ENCODE measurements at regions of chr6 and their contacts with region 1.

Region 1: GRCh38 chr6:109073344-109074132 is 21.1 kb downstream of the SESN1 start:
- DNase-seq: no peak
- H3K4me3 ChIP-seq: no peak overlapping the region
- H3K27ac ChIP-seq: no peak overlapping the region
- H3K4me1 ChIP-seq: peaks cover 22 to 63% (median 51%) of the 10 kb centered on the region in 4 donors
- H3K27me3 ChIP-seq: no peaks in the 10 kb centered on the region
- CTCF ChIP-seq: peak; percentile 60 to 80 (median 71)
- EP300 ChIP-seq: no peak
- POLR2A ChIP-seq: no peak

Region 2: GRCh38 chr6:108541838-108542759 is 531.4 kb before region 1 on chr6:
- intact Hi-C with region 1: loop called (anchors 5 kb)
- DNase-seq: no peak
- H3K4me3 ChIP-seq: no peak overlapping the region
- H3K27ac ChIP-seq: no peak overlapping the region
- H3K4me1 ChIP-seq: peaks cover 4 to 30% (median 23%) of the 10 kb centered on the region in 4 donors
- H3K27me3 ChIP-seq: no peaks in the 10 kb centered on the region
- CTCF ChIP-seq: peak; percentile 82 to 90 (median 89)
- EP300 ChIP-seq: no peak
- POLR2A ChIP-seq: no peak

Region 3: GRCh38 chr6:108848116-108848868 is 225.2 kb before region 1 on chr6 and contains the start of gene ARMC2:
- intact Hi-C with region 1: loop called (anchors 5 kb)
- DNase-seq: peak; percentile 97
- H3K4me3 ChIP-seq: peak within 1 kb of the TSS; percentile 75 to 91 (median 78)
- H3K27ac ChIP-seq: peak within 1 kb of the TSS; percentile 80 to 86 (median 82)
- H3K4me1 ChIP-seq: peaks cover 25 to 34% (median 29%) of the 10 kb centered on the region in 4 donors
- H3K27me3 ChIP-seq: no peaks in the 10 kb centered on the region
- CTCF ChIP-seq: peak in 1 of 3 experiments; percentile 19
- EP300 ChIP-seq: no peak
- POLR2A ChIP-seq: peak; percentile 43
- total RNA-seq, gene ARMC2: 2.1 to 5.1 (median 3.2) TPM

Region 4: DNA sequence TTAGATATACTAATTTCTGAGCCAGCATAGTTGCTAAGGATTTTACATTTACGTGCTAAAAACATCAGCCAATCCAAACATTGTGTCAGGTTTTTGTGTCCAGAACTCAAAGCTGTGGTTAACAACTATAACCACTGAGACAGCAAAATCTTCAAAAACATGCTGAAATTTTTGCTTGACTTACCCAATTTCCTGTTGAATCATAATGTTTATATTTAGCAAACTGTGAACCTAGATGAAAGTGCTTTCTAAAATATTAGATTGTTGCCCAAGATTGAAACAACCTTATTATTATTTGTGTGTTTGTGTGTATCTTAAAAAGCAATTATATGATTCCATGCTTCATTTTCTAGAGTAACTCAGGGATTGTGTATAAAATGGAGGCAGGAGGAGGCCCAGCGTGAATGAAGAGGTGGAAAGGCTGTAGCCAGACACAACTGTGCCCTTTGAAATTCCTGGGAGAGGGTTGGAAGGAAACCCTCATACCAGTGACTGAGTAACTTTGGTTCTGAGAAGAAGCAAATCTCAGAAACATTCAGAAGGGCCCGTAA is 177.4 kb before region 1 on chr6:
- intact Hi-C with region 1: loop called (anchors 5 kb)
- DNase-seq: no peak
- H3K4me3 ChIP-seq: no peak overlapping the region
- H3K27ac ChIP-seq: peak overlapping the region; percentile 37 to 58 (median 52)
- H3K4me1 ChIP-seq: peaks cover 17 to 24% (median 21%) of the 10 kb centered on the region in 4 donors
- H3K27me3 ChIP-seq: no peaks in the 10 kb centered on the region
- CTCF ChIP-seq: no peak
- EP300 ChIP-seq: no peak
- POLR2A ChIP-seq: no peak

Region 5: GRCh38 chr6:109009236-109009961 is 64.1 kb before region 1 on chr6:
- intact Hi-C with region 1: loop called (anchors 5 kb)
- DNase-seq: peak; percentile 96
- H3K4me3 ChIP-seq: peak overlapping the region; percentile 88 to 95 (median 92)
- H3K27ac ChIP-seq: peak overlapping the region; percentile 97
- H3K4me1 ChIP-seq: peaks cover 26 to 68% (median 48%) of the 10 kb centered on the region in 4 donors
- H3K27me3 ChIP-seq: no peaks in the 10 kb centered on the region
- CTCF ChIP-seq: peak in 2 of 3 experiments; percentile 21 to 43
- EP300 ChIP-seq: no peak
- POLR2A ChIP-seq: peak; percentile 40